Psoas muscle (tissue), 8 donors: ENCODE measurements at regions of chr10 and their contacts with region 1.

Region 1: DNA sequence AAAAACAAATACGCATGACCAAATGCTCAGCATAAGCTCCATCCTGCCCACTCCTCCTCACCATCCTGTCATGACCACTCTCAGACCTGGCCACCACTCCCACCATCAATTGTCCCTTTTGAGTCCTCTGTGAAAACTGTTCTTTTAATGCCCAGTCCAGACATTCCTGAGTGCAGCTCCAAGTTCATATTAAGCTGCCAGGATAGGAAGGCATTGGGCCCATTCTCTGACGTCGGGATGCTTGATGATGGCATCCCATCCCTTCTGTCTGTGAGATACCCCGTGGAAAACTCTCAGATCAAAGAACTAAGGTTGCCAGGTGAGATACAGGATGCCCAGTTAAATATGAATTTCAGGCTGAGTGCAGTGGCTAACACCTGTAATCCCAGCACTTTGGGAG is 89.9 kb upstream of the KIF5B start:
- DNase-seq: no peak
- ATAC-seq: no peak
- H3K4me3 ChIP-seq: no peak overlapping the region
- H3K27ac ChIP-seq: no peak overlapping the region
- H3K4me1 ChIP-seq: peaks cover 3% of the 10 kb centered on the region
- H3K27me3 ChIP-seq: no peaks in the 10 kb centered on the region
- CTCF ChIP-seq: no peak

Region 2: GRCh38 chr10:32171204-32171603 is 25.0 kb after region 1 on chr10:
- intact Hi-C with region 1: loop called in 1 of 2 experiments (anchors 2 kb)
- DNase-seq: no peak
- ATAC-seq: no peak
- H3K4me3 ChIP-seq: no peak overlapping the region
- H3K27ac ChIP-seq: no peak overlapping the region
- H3K4me1 ChIP-seq: no peaks in the 10 kb centered on the region
- H3K27me3 ChIP-seq: no peaks in the 10 kb centered on the region
- CTCF ChIP-seq: no peak